ENCODE measurements at regions of chr13 and their contacts with region 1.

Region 1: DNA sequence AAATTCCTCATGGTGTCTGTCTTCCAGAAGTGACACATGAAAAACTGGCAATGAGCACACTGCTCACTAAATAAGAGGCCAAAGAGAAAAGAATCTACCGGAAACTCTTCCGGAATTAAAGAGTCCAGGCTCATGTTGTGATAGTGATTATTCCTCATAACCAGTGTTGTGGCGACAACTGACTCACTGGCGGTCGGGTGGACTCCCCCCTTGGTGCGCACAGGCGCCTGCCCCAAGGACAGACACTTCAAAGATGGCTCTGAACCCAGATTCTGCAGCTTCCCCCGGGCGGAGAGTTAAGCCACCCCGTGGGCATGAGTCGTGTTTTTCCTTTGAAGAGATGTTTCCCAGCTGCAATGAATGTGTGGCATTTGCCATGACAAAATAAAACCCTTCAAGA is 10.3 kb downstream of the IL17D start:
- DNase-seq: no peak
- ATAC-seq: peak in 7 of 8 donors; percentile 24 to 57 (median 41)
- H3K4me3 ChIP-seq: peak overlapping the region in 1 of 10 donors; percentile 40
- H3K27ac ChIP-seq: peak overlapping the region; percentile 42 to 88 (median 75)
- H3K4me1 ChIP-seq: peaks cover 3 to 40% (median 24%) of the 10 kb centered on the region in 9 donors
- H3K27me3 ChIP-seq: no peaks in the 10 kb centered on the region
- CTCF ChIP-seq: no peak

Region 2: DNA sequence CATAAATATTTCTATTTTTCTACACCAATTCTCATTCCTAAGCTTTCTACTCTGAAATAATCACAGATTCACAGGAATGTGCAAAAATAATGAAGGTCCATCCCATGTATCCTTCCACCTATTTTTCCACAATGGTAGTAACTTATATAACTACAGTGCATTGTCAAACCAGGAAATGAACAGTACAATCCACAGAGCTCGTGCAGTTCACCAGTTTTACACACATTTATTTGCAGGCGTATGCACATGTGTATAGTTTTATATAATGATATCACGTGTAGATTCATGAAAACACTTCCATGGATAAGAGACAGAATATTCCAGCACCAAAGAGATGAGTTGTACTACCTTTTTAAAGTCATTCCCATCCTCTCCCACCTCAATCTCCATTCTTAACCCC is 47.1 kb after region 1 on chr13:
- intact Hi-C with region 1: no loop called
- DNase-seq: no peak
- ATAC-seq: no peak
- H3K4me3 ChIP-seq: no peak overlapping the region
- H3K27ac ChIP-seq: no peak overlapping the region
- H3K4me1 ChIP-seq: no peaks in the 10 kb centered on the region
- H3K27me3 ChIP-seq: no peaks in the 10 kb centered on the region
- CTCF ChIP-seq: no peak

Region 3: GRCh38 chr13:20773194-20774080 is 59.7 kb after region 1 on chr13 and contains the start of gene EEF1AKMT1:
- intact Hi-C with region 1: loop called in 3 of 10 experiments (anchors 5 to 10 kb)
- DNase-seq: peak; percentile 92 to 97
- ATAC-seq: peak; percentile 97 to 100 (median 99)
- H3K4me3 ChIP-seq: peak within 1 kb of the TSS; percentile 52 to 86 (median 66)
- H3K27ac ChIP-seq: peak within 1 kb of the TSS; percentile 85 to 95 (median 89)
- H3K4me1 ChIP-seq: peaks cover 0 to 15% (median 9%) of the 10 kb centered on the region in 9 donors
- H3K27me3 ChIP-seq: no peaks in the 10 kb centered on the region
- CTCF ChIP-seq: no peak
- total RNA-seq, gene EEF1AKMT1: 6.1 to 9.9 (median 7.9) TPM

Region 4: DNA sequence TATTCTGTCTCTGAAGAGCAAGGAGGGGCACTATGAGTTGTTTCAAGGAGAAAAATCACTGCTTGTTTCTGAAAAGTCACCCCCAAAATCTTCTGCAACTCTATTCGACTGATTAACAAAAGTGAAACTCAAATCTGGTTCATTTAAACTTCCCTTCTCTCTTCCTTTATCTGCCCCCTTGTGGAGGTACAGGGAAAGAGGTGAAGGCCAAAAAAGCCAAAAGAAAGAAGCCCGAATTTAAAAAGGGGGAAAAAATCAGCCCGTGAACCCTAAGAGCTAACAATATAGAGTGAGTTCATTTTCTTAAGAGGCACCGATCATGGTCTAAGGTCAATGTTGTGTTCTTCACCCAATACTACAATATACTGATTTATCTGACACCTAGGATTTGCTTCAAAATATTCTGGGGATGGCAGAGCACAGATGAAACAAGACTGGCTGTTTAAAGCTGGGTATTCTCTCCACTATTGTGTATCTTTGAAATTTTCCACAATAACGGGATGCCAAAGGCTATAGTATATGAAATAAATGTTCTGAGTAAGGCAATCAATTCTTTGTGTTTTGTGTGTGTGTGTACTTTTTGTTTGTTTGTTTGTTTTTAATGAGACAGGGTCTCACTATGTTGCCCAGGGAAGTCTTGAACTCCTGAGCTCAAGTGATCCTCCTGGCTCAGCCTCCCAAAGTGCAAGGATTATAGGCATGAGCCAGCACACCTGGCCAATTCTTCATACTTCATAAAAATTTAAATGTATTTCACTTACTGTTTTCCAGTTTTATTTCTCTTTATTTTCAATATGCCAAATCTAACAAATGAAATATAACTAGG is 115.0 kb after region 1 on chr13:
- intact Hi-C with region 1: loop called (anchors 1 to 5 kb)
- DNase-seq: peak in 1 of 2 donors; percentile 52
- ATAC-seq: peak in 6 of 8 donors; percentile 24 to 68 (median 51)
- H3K4me3 ChIP-seq: peak overlapping the region in 7 of 10 donors; percentile 14 to 43 (median 33)
- H3K27ac ChIP-seq: peak overlapping the region in 9 of 10 donors; percentile 1 to 82 (median 66)
- H3K4me1 ChIP-seq: peaks cover 0 to 22% (median 10%) of the 10 kb centered on the region in 9 donors
- H3K27me3 ChIP-seq: no peaks in the 10 kb centered on the region
- CTCF ChIP-seq: peak; percentile 55 to 87 (median 79)

Region 5: GRCh38 chr13:20869542-20869941 is 155.8 kb after region 1 on chr13:
- intact Hi-C with region 1: loop called in 1 of 10 experiments (anchors 5 kb)
- DNase-seq: no peak
- ATAC-seq: peak in 3 of 8 donors; percentile 49 to 67 (median 57)
- H3K4me3 ChIP-seq: no peak overlapping the region
- H3K27ac ChIP-seq: no peak overlapping the region
- H3K4me1 ChIP-seq: peaks cover 0 to 28% (median 12%) of the 10 kb centered on the region in 9 donors
- H3K27me3 ChIP-seq: no peaks in the 10 kb centered on the region
- CTCF ChIP-seq: peak in 8 of 9 donors; percentile 9 to 62 (median 42)

Region 6: GRCh38 chr13:20924758-20925394 is 211.1 kb after region 1 on chr13:
- intact Hi-C with region 1: loop called in 9 of 10 experiments (anchors 1 to 5 kb)
- DNase-seq: peak; percentile 46 to 80
- ATAC-seq: peak in 3 of 8 donors; percentile 48 to 61 (median 58)
- H3K4me3 ChIP-seq: no peak overlapping the region
- H3K27ac ChIP-seq: no peak overlapping the region
- H3K4me1 ChIP-seq: no peaks in the 10 kb centered on the region
- H3K27me3 ChIP-seq: no peaks in the 10 kb centered on the region
- CTCF ChIP-seq: peak; percentile 40 to 90 (median 83)